K562 (cell line): ENCODE measurements at regions of chr18 and their contacts with region 1.

Region 1: DNA sequence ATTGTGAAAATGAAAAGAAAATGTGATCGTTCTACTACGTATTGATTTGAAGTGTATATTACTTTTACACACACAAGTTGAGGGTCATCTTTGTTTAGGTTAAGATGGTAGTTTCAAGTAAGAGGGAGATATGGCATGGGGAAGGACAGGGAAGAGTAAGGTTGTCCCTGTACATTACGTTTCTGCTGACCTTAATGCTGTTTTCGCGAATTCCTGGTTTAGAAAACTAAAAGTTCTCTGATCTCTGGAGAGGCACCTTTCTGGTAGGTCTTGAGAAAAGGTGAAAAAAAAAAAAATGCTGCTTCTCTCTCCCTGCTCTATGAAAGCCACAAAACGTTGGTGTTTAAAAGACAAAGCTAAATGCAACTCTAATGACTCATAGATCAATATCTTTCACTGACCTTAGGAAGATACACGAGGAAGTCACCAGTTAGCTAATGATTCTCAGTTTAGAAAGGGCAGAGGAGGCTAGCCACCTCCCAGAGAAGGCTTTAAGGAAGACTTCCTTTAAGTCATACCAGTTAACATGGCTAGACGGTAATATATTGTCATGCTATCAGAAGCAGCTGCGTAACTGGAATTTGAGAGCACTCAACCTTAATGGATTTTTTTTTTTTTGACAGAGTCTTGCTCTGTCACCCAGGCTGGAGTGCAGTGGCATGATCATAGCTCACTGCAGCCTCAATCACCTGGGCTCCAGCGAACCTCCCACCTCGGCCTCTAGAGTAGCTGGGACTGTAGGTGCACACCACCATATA is 13.2 kb downstream of the TXNDC2 start:
- DNase-seq: peak; percentile 52 to 91 (median 66)
- ATAC-seq: peak; percentile 80
- H3K4me3 ChIP-seq: peak overlapping the region; percentile 18
- H3K27ac ChIP-seq: peak overlapping the region; percentile 96
- H3K4me1 ChIP-seq: peaks cover 26 to 62% of the 10 kb centered on the region in 2 experiments
- H3K27me3 ChIP-seq: no peaks in the 10 kb centered on the region
- CTCF ChIP-seq: no peak; a peak in 1 of 6 replicates
- EP300 ChIP-seq: peak; percentile 87
- POLR2A ChIP-seq: peak; percentile 69; the same call in 1 of the 2 replicates
- RAD21 ChIP-seq: peak; percentile 11 to 32; a peak in 2 of 4 replicates

Region 2: DNA sequence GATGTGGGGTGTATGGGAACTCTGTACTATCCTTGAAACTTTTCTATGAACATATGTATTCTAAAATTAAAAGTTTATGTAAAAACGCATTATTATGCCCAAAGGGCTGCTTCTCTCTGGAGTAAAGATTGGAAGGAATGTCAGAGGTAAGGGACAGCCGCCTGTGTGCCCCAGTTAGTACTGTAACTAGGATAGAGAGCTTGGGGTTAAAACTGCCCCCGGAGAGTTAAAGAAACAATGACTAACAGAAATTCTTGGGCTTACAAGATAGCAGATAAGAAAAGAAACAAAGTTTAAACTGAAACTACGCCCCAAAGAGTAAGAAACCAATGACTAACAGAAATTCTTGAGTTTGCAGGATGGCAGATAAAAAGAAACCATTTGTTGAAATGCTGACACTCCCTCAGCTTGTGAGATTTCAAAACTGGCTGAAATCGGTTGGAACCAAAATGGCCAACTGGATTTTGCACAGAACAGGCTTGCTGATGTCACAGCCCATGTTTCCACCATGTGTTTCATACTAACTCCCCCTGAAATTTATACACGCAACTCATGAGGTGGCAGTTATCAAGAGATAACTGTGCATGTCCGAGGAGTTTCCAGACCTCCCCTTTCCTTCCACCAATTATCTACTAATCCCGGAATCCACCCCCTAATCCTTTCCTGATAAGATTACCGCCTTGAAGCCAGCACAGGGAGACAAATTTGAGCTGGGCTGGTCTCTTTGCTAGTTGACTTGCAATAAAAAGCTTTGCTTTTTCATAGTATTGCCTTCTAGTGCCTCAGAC is 21.9 kb before region 1 on chr18:
- CTCF ChIA-PET with region 1: no interaction called
- POLR2A ChIA-PET with region 1: interaction called, 11 read pairs
- in situ Hi-C with region 1: no loop called
- intact Hi-C with region 1: no loop called
- DNase-seq: peak; percentile 80 to 98 (median 88)
- ATAC-seq: peak; percentile 85
- H3K4me3 ChIP-seq: peak overlapping the region; percentile 7; the same call in 1 of the 2 replicates
- H3K27ac ChIP-seq: peak overlapping the region; percentile 97
- H3K4me1 ChIP-seq: peaks cover 23 to 57% of the 10 kb centered on the region in 2 experiments
- H3K27me3 ChIP-seq: no peaks in the 10 kb centered on the region
- CTCF ChIP-seq: peak in 1 of 3 experiments; percentile 15; a peak in 2 of 6 replicates
- EP300 ChIP-seq: peak; percentile 96
- POLR2A ChIP-seq: peak; percentile 71; the same call in 1 of the 2 replicates
- RAD21 ChIP-seq: peak; percentile 34 to 38

Region 3: DNA sequence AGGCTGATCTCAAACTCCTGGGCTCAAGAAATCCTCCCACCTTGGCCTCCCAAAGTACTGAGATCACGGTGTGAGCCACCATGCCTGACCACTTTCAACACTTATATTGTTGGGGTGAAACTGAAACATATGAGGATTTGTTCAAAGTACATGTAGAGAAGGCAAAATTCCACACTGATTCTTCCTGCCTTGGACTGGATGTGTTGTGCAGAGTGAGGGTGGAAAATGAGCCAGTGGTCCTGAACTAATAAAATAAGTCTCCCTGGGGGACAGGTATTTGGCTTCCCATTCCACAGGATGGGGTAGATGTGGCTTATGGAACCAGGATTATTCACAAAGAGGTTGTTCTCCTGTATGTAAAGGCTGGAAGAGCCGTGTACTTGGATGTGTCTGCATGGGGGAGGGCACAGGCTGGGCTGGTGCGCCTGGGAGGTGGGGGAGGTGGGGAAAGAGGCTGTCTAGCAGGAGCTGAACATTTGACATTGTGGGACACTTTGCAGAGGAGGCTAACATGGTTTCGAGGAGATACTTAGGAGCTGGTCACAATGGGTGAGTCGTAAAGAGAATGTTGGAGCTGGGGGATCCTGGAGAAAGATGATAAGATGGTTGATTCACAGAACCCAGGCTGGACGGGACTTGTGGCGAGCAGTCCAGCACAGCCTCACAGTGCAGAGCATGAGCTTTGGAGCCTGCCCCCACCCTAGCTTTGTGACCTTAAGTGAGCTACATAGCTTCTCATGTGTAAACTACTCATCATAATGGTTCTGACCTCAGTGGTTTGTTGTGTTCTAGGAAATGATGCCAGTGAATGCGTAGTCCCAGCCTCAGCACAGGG is 13.6 kb before region 1 on chr18 and contains the start of gene TXNDC2:
- CTCF ChIA-PET with region 1: no interaction called
- POLR2A ChIA-PET with region 1: interaction called, 26 read pairs
- in situ Hi-C with region 1: no loop called
- intact Hi-C with region 1: no loop called
- DNase-seq: peak; percentile 74 to 97 (median 81)
- ATAC-seq: peak; percentile 82
- H3K4me3 ChIP-seq: no peak within 1 kb of the TSS; the same call in 1 of the 2 replicates
- H3K27ac ChIP-seq: peak within 1 kb of the TSS; percentile 82
- H3K4me1 ChIP-seq: peaks cover 34 to 61% of the 10 kb centered on the region in 2 experiments
- H3K27me3 ChIP-seq: no peaks in the 10 kb centered on the region
- CTCF ChIP-seq: 0 out of 6 replicates have a peak, but pooled peaks of 1 of the 3 experiments have one; percentile 7
- EP300 ChIP-seq: peak; percentile 80; the same call in 1 of the 2 replicates
- POLR2A ChIP-seq: peak; percentile 52
- RAD21 ChIP-seq: peak in 1 of 2 experiments; percentile 30; a peak in 1 of 4 replicates
- polyA plus RNA-seq, gene TXNDC2: 1.2 to 2.3 TPM